Body of pancreas (tissue), 4 donors: ENCODE measurements at regions of chr1 and their contacts with region 1.

Region 1: GRCh38 chr1:19010995-19011844 is 54.7 kb upstream of the IFFO2 start:
- DNase-seq: peak; percentile 88 to 94 (median 91)
- ATAC-seq: peak; percentile 73
- H3K4me3 ChIP-seq: no peak overlapping the region
- H3K27ac ChIP-seq: peak overlapping the region; percentile 92 to 99 (median 98)
- H3K4me1 ChIP-seq: peaks cover 71% of the 10 kb centered on the region
- H3K27me3 ChIP-seq: no peaks in the 10 kb centered on the region
- CTCF ChIP-seq: no peak
- POLR2A ChIP-seq: peak in 2 of 3 donors; percentile 68 to 78

Region 2: DNA sequence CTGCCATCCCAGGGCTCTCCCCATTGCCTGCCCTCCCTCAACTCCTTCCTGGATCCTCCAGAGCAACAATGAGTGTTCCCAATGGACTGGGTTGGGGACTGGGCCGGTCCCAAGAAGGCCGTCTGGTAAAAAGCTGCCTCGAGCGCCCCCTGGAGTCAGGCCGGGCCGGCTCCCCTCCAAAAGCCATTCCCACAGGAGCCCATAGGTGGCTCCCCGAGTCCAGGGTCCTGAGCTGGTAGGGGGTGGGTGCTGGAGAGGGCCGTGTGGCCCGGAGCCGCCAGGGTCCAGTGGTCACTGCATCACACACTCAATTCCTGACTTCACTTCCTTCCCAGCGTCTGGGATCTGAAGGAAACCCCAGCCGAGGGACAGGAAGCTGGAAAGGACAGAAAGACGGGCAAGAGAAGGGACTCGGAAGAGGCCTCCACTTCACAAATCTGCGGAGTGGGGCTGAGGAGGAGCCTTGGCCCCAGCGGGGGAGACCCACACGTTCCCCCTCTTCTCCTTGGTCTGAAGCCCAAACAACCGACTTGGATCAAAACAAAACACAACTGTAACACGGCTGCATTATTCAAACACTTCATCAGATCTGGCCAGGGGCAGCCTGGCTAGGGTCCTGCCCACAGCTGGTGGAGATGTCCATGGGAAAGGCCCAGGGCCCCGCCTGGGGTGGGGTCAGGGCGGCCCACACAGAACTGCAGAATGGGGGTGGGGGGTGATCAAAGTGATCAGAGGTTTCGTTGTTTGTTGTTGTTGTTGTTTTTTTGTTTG is 98.0 kb before region 1 on chr1:
- intact Hi-C with region 1: loop called (anchors 10 kb)
- DNase-seq: peak; percentile 79 to 88 (median 80)
- ATAC-seq: peak; percentile 86
- H3K4me3 ChIP-seq: no peak overlapping the region
- H3K27ac ChIP-seq: peak overlapping the region in 3 of 4 donors; percentile 36 to 63 (median 37)
- H3K4me1 ChIP-seq: peaks cover 5% of the 10 kb centered on the region
- H3K27me3 ChIP-seq: no peaks in the 10 kb centered on the region
- CTCF ChIP-seq: peak; percentile 82 to 99 (median 95)
- POLR2A ChIP-seq: no peak

Region 3: DNA sequence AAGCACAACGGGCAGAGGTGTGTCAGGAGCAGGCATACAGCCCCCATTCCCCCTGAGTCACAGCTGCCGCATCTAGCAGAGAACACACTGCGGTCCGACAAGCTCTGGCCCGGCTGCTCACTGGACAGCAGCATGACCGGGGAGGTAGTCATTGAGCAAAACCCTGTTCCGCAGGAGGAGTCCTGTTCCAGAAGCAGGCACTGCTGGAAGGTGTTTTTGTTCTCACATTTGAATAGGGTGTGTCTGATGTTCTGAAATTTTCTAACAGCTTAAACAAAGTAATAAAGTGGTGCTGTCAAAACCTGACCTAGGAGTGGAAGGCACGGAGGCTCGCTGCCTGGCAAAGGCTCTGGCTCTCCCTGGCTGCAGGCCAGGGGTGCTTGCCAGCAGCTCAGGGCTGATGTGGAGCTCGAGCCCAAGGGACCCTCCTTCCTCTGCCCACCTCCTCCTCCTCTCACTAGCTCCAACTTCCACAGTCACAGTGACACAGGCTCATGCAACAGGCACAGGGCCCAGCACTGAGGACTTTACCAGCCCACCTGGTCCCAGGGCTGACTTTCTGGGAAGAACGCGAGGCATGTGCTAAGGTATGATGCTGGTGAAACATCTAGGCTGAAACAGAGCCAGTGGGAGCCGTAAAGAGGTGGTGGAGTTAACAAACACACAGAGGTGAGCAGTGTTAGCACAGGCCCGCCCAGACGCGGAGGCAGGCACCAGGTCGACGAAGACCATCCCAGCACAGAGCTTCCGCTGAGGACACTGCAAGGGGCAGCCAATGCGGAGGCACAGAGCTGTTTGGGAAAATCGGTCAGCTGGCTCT is 63.9 kb after region 1 on chr1:
- intact Hi-C with region 1: loop called (anchors 10 kb)
- DNase-seq: peak; percentile 52 to 75 (median 68)
- ATAC-seq: peak; percentile 70
- H3K4me3 ChIP-seq: no peak overlapping the region
- H3K27ac ChIP-seq: peak overlapping the region; percentile 44 to 78 (median 66)
- H3K4me1 ChIP-seq: peaks cover 52% of the 10 kb centered on the region
- H3K27me3 ChIP-seq: no peaks in the 10 kb centered on the region
- CTCF ChIP-seq: no peak
- POLR2A ChIP-seq: no peak